GM12878 (cell line): ENCODE measurements at regions of chr9 and their contacts with region 1.

Region 1: DNA sequence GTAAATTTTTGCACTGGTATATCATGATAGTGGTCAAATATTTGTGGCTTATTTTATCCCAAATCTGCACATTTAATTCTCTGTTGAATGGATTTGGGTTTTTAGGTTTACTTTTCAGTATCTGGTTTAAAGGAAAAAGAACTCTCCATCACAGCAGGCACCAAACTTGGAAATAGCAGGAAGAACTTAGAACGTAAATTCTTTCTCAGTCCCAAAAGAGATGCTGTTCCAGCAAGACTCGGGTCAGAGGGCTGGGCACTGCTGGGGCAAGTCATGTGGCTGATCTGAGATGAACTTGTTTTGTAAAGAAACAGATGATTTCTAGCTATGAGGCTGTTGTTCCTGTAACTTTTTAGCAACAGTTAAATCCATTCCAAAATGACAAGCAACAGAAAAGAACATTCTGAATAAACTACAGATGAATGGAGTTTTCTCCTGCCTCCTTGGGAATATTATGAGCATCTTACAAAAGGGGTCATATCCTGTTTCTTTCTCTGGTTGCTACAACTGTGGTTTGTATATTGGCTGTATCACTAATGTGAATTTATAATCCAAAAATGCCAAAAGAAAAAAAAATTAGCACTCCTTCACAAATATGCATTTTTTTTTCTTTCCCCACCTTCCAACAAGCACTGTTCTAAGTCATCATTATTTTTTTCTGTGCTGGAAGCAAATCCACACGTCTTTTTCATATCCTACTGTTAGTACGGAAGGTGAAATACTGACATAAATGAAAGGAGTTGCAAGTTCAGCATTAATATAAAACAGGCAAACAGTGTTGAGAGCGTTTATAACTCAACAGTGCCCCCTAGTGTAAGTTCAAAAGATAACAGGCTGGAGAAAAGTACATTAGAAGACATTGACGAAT is 31.1 kb downstream of the OR2K2 start:
- DNase-seq: peak; percentile 37
- ATAC-seq: peak; percentile 87
- H3K4me3 ChIP-seq: no peak overlapping the region
- H3K27ac ChIP-seq: no peak overlapping the region
- H3K4me1 ChIP-seq: no peaks in the 10 kb centered on the region
- H3K27me3 ChIP-seq: no peaks in the 10 kb centered on the region
- CTCF ChIP-seq: peak; percentile 56 to 87 (median 65)
- EP300 ChIP-seq: no peak
- POLR2A ChIP-seq: no peak
- RAD21 ChIP-seq: peak; percentile 99

Region 2: DNA sequence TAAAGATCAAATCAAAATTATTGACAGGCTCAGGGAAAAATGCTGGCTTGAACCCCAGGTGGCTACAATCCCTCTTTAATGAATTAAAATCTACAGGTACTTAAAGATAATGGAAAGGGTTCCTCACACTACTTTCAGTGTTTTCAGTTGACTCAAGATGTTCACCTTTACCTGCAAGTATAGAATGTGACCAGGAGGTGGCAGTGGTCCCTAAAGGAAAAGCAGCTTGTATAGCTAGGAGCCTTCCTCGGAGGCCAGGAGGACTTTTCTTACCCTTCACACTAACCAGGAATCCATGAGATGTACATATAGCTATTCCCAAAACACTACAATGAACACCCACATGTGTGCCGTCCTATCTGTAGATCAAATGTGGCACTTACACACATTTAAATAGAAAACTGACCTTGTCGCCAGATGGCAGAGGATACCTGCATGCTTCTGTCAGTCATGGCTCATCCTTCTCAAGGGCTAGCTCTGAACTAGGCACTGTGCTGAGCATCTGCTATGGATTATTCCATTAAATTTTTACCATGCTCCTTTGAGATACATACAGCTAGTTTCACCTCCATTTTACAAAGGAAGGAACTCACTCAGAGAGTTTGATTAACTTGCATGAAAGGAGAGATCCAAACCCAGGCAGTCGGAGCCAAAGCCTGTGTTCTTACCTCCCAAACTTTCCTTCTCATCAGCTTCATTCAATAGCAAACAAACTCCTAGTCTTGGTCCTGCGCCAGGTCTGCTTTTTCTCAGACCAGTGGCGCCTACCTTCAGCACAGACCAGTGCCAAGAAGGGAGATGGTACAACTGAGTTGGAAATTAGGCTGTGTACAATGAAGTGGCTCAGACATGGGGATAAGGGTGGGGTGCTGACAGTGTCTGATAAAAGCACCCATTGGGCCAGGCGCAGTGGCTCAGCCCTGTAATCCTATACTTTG is 1115.5 kb before region 1 on chr9:
- CTCF ChIA-PET with region 1: no interaction called
- POLR2A ChIA-PET with region 1: no interaction called
- RAD21 ChIA-PET with region 1: no interaction called
- SMC1A ChIA-PET with region 1: no interaction called
- in situ Hi-C with region 1: loop called (anchors 25 kb)
- intact Hi-C with region 1: loop called (anchors 10 kb)
- DNase-seq: peak; percentile 25
- ATAC-seq: peak; percentile 91
- H3K4me3 ChIP-seq: no peak overlapping the region
- H3K27ac ChIP-seq: no peak overlapping the region
- H3K4me1 ChIP-seq: no peaks in the 10 kb centered on the region
- H3K27me3 ChIP-seq: no peaks in the 10 kb centered on the region
- CTCF ChIP-seq: peak; percentile 75 to 79 (median 76); a peak in 5 of 6 replicates
- EP300 ChIP-seq: no peak
- POLR2A ChIP-seq: no peak
- RAD21 ChIP-seq: peak; percentile 91

Region 3: DNA sequence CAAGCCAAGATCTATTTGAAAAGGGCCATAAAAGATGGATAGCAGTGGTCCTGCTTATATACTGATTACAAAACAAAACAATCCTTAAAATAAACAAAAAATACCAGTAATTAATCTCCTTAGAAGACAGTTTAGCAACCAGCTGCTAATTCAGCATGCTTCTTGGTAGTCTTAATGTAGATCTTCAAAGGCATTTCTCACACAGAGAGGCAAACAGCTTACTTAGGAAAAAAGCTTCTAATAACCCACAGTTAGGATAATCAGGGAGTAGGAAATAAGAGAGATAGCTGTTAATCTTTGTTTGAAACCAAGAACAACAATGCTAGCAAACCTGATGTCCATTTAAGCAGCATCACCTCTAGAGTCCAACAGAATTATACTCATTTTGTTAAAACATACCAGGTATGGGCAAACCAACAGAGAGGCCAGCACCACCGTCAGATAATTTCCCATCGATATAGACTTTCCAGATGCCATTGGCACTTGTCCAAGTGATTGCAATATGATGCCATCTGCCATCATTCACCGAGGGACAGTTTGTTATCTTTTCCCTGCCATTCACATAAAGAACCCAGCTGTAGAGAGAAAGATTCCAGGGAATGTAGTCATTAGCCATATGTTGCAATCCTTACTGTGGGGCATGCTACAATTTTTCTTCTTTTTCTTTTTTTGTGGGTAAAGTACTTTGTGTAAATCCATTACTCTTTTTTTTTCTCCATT is 855.7 kb before region 1 on chr9:
- CTCF ChIA-PET with region 1: no interaction called
- POLR2A ChIA-PET with region 1: no interaction called
- RAD21 ChIA-PET with region 1: no interaction called
- SMC1A ChIA-PET with region 1: no interaction called
- in situ Hi-C with region 1: loop called (anchors 10 kb)
- intact Hi-C with region 1: no loop called
- DNase-seq: no peak
- ATAC-seq: no peak
- H3K4me3 ChIP-seq: no peak overlapping the region
- H3K27ac ChIP-seq: no peak overlapping the region
- H3K4me1 ChIP-seq: no peaks in the 10 kb centered on the region
- H3K27me3 ChIP-seq: no peaks in the 10 kb centered on the region; a peak in 2 of 4 replicates
- CTCF ChIP-seq: no peak
- EP300 ChIP-seq: no peak
- POLR2A ChIP-seq: no peak
- RAD21 ChIP-seq: no peak

Region 4: GRCh38 chr9:110638381-110638954 is 660.5 kb before region 1 on chr9:
- CTCF ChIA-PET with region 1: interaction called, 26 read pairs
- POLR2A ChIA-PET with region 1: no interaction called
- RAD21 ChIA-PET with region 1: interaction called, 29 read pairs
- SMC1A ChIA-PET with region 1: interaction called, 53 read pairs
- in situ Hi-C with region 1: loop called (anchors 5 kb)
- intact Hi-C with region 1: loop called (anchors 1 kb)
- DNase-seq: no peak
- ATAC-seq: peak; percentile 43; the same call in 1 of the 3 replicates
- H3K4me3 ChIP-seq: no peak overlapping the region
- H3K27ac ChIP-seq: no peak overlapping the region
- H3K4me1 ChIP-seq: no peaks in the 10 kb centered on the region
- H3K27me3 ChIP-seq: no peaks in the 10 kb centered on the region
- CTCF ChIP-seq: peak in 2 of 3 experiments; percentile 11 to 21; a peak in 3 of 6 replicates
- EP300 ChIP-seq: no peak
- POLR2A ChIP-seq: no peak
- RAD21 ChIP-seq: peak; percentile 81

Region 5: DNA sequence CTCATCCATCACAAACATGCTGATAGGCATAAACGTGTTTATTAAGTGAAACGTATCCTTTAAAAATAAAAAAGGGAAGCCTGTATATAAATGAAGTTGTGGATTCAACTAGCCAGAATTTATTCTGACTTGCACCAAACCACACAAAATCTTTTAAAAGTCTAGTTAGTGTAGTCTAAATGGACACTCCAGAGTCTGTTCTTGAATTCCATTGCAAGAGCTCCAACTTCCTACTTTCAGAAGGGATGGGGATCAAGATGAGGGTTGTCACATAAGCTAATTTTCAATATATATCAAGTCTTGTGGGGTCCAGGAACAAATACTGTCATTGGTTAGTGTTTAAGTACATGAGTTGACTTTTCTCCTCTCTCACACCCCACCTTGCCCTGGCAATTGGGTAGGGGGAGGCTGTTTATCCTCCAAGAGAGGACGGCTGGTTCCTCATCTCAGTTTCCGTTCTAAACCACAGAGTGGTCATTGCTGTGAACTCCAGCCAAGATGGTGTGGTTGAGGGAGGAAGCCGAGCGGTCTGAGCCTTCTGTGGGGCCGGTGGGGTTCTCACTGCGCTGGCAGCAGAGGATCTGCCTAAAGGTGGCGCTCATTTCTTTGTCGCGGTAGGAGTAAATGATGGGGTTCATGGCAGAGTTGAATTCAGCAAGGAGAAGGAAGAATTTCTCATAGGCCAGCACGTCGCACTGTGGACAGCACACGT is 423.8 kb before region 1 on chr9:
- CTCF ChIA-PET with region 1: no interaction called
- POLR2A ChIA-PET with region 1: no interaction called
- RAD21 ChIA-PET with region 1: no interaction called
- SMC1A ChIA-PET with region 1: no interaction called
- in situ Hi-C with region 1: no loop called
- intact Hi-C with region 1: loop called (anchors 1 kb)
- DNase-seq: peak; percentile 48
- ATAC-seq: peak; percentile 95
- H3K4me3 ChIP-seq: no peak overlapping the region
- H3K27ac ChIP-seq: no peak overlapping the region
- H3K4me1 ChIP-seq: peaks cover 4% of the 10 kb centered on the region; the same call in 1 of the 2 replicates
- H3K27me3 ChIP-seq: no peaks in the 10 kb centered on the region
- CTCF ChIP-seq: peak; percentile 39 to 59 (median 40); a peak in 5 of 6 replicates
- EP300 ChIP-seq: 0 out of 4 replicates have a peak, but pooled peaks of 1 of the 2 experiments have one; percentile 48
- POLR2A ChIP-seq: no peak
- RAD21 ChIP-seq: peak; percentile 79

Region 6: GRCh38 chr9:111149016-111149759 is 149.8 kb before region 1 on chr9:
- CTCF ChIA-PET with region 1: interaction called, 14 read pairs
- POLR2A ChIA-PET with region 1: no interaction called
- RAD21 ChIA-PET with region 1: interaction called, 6 read pairs
- SMC1A ChIA-PET with region 1: interaction called, 8 read pairs
- in situ Hi-C with region 1: no loop called
- intact Hi-C with region 1: loop called (anchors 2 kb)
- DNase-seq: no peak
- ATAC-seq: peak; percentile 82
- H3K4me3 ChIP-seq: no peak overlapping the region
- H3K27ac ChIP-seq: no peak overlapping the region
- H3K4me1 ChIP-seq: no peaks in the 10 kb centered on the region; the same call in 1 of the 2 replicates
- H3K27me3 ChIP-seq: no peaks in the 10 kb centered on the region
- CTCF ChIP-seq: peak in 2 of 3 experiments; percentile 23 to 40; a peak in 3 of 6 replicates
- EP300 ChIP-seq: no peak
- POLR2A ChIP-seq: no peak
- RAD21 ChIP-seq: peak; percentile 49; the same call in 1 of the 2 replicates